HEK293 (cell line): ENCODE measurements at regions of chr9 and their contacts with region 1.

Region 1: GRCh38 chr9:113963017-113963620 is 87.0 kb downstream of the ZNF618 start:
- H3K4me3 ChIP-seq: no peak overlapping the region
- H3K27ac ChIP-seq: no peak overlapping the region
- H3K4me1 ChIP-seq: no peaks in the 10 kb centered on the region; the same call in 1 of the 2 replicates
- CTCF ChIP-seq: no peak

Region 2: GRCh38 chr9:113943112-113944009 is 19.8 kb before region 1 on chr9:
- CTCF ChIA-PET with region 1: interaction called, 15 read pairs
- POLR2A ChIA-PET with region 1: no interaction called
- H3K4me3 ChIP-seq: no peak overlapping the region
- H3K27ac ChIP-seq: no peak overlapping the region
- H3K4me1 ChIP-seq: no peaks in the 10 kb centered on the region
- CTCF ChIP-seq: no peak

Region 3: GRCh38 chr9:113973851-113974413 is 10.8 kb after region 1 on chr9:
- CTCF ChIA-PET with region 1: interaction called, 15 read pairs
- POLR2A ChIA-PET with region 1: no interaction called
- H3K4me3 ChIP-seq: no peak overlapping the region
- H3K27ac ChIP-seq: no peak overlapping the region
- H3K4me1 ChIP-seq: peaks cover 7% of the 10 kb centered on the region; the same call in 1 of the 2 replicates
- CTCF ChIP-seq: no peak

Region 4: DNA sequence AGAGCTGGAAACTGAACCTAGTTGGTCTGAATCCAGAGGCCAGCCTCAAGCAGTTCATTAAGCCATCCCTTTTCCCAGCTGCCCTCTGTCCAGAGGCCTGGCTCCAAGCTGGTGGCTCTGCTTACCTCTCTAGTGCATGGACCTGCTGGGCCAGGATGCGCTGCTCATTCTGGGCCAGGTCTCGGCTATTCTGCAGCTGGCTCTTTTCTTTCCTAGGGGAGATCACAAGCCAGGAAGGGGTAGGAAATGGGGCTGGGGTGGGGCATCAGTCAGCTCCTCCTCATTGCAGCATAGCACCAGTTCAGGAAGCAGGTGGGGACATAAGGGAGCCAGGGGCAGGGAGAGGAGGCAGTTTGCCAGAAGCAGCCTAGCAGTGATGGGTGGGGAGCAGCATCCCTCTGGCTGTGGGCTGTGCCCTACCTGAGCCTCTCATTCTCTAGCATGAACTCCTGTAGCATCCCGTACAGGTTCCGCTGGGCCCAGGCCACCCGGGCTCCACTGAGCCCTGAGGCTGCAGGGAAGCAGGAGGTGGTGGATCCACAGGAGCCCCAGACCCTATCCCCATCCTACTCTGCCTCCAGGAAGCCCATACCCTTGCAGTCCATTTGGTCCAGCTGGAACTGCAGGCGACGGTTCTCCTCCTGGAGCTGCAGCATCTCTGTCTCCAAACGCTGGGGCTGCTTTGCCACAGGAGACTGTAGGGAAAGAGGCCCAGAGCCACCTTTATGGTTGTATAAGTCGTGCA is 130.8 kb after region 1 on chr9:
- CTCF ChIA-PET with region 1: no interaction called
- POLR2A ChIA-PET with region 1: no interaction called
- H3K4me3 ChIP-seq: no peak overlapping the region
- H3K27ac ChIP-seq: no peak overlapping the region
- H3K4me1 ChIP-seq: no peaks in the 10 kb centered on the region
- CTCF ChIP-seq: no peak